HCT116 (cell line): ENCODE measurements at regions of chr2 and their contacts with region 1.

Region 1: GRCh38 chr2:226118471-226119430 is 680.9 kb downstream of the IRS1 start:
- DNase-seq: peak; percentile 89
- ATAC-seq: peak; percentile 63
- H3K4me3 ChIP-seq: no peak overlapping the region
- H3K27ac ChIP-seq: peak overlapping the region; percentile 95
- H3K4me1 ChIP-seq: peaks cover 85 to 97% of the 10 kb centered on the region in 2 experiments
- H3K27me3 ChIP-seq: no peaks in the 10 kb centered on the region
- CTCF ChIP-seq: no peak
- POLR2A ChIP-seq: no peak
- RAD21 ChIP-seq: peak; percentile 38

Region 2: GRCh38 chr2:225668606-225669266 is 450.0 kb before region 1 on chr2:
- CTCF ChIA-PET with region 1: interaction called, 3 read pairs
- POLR2A ChIA-PET with region 1: interaction called, 3 read pairs
- RAD21 ChIA-PET with region 1: no interaction called
- intact Hi-C with region 1: loop called (anchors 1 kb)
- DNase-seq: peak; percentile 72
- ATAC-seq: peak; percentile 79
- H3K4me3 ChIP-seq: no peak overlapping the region
- H3K27ac ChIP-seq: peak overlapping the region; percentile 67; the same call in 1 of the 2 replicates
- H3K4me1 ChIP-seq: peaks cover 21 to 32% of the 10 kb centered on the region in 2 experiments
- H3K27me3 ChIP-seq: no peaks in the 10 kb centered on the region
- CTCF ChIP-seq: peak; percentile 74 to 91 (median 80)
- POLR2A ChIP-seq: no peak
- RAD21 ChIP-seq: peak; percentile 86

Region 3: DNA sequence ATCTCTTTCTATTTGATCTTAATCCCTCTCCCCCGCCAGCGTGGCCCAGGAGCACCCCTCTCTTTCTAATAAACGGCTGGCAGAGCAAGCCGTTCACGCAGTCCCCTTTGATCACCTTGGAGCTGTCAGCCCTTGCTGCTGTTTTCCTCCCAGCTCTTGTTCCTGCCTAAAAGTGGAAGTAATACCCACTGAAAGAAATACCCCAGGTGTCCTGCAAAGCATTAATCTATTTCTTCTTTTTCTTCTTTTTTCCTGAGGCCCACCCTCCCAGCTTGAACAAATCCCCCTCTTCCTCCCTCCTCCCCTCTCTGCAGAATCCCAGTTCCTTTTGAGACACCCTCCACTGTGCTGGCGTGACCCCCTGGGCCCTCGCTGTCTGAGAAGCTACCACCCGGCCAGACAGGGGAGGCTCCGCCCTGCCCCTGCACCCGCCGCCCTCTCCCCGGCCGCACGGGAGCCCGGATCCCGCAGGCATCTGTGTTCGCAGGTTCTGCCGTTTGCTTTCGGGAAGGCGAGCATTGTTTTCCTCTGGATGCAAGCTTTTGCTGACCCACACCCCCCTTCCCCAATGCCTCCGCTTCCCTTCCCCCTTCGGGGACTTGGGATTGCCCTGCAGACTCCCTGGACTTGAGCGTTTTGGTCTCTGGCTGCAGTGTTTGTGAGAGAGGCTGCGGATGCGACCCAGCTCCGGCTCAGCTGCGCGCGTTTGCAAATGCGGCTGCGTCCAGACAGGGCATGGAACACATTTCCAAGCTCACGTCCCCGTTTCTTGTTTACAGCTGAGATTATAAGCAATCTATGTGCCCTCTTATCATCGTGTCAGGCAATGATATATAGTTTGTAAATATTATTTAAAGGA is 87.7 kb before region 1 on chr2:
- CTCF ChIA-PET with region 1: no interaction called
- POLR2A ChIA-PET with region 1: interaction called, 11 read pairs
- RAD21 ChIA-PET with region 1: no interaction called
- intact Hi-C with region 1: loop called (anchors 2 kb)
- DNase-seq: peak; percentile 65
- ATAC-seq: peak; percentile 92
- H3K4me3 ChIP-seq: peak overlapping the region; percentile 48 to 65
- H3K27ac ChIP-seq: peak overlapping the region; percentile 86
- H3K4me1 ChIP-seq: peaks cover 38 to 49% of the 10 kb centered on the region in 2 experiments
- H3K27me3 ChIP-seq: no peaks in the 10 kb centered on the region
- CTCF ChIP-seq: no peak
- POLR2A ChIP-seq: no peak
- RAD21 ChIP-seq: no peak

Region 4: GRCh38 chr2:226185616-226186211 is 67.0 kb after region 1 on chr2:
- CTCF ChIA-PET with region 1: interaction called, 3 read pairs
- POLR2A ChIA-PET with region 1: interaction called, 10 read pairs
- RAD21 ChIA-PET with region 1: no interaction called
- intact Hi-C with region 1: loop called (anchors 2 kb)
- DNase-seq: peak; percentile 84
- ATAC-seq: peak; percentile 68
- H3K4me3 ChIP-seq: peak overlapping the region; percentile 22 to 45; a peak in 3 of 4 replicates
- H3K27ac ChIP-seq: peak overlapping the region; percentile 95
- H3K4me1 ChIP-seq: peaks cover 82 to 100% of the 10 kb centered on the region in 2 experiments
- H3K27me3 ChIP-seq: no peaks in the 10 kb centered on the region
- CTCF ChIP-seq: peak in 1 of 3 experiments; percentile 14; a peak in 2 of 6 replicates
- POLR2A ChIP-seq: no peak
- RAD21 ChIP-seq: peak; percentile 40

Region 5: GRCh38 chr2:226295123-226295522 is 176.4 kb after region 1 on chr2:
- CTCF ChIA-PET with region 1: no interaction called
- POLR2A ChIA-PET with region 1: no interaction called
- RAD21 ChIA-PET with region 1: no interaction called
- intact Hi-C with region 1: no loop called
- DNase-seq: no peak
- ATAC-seq: no peak
- H3K4me3 ChIP-seq: no peak overlapping the region
- H3K27ac ChIP-seq: no peak overlapping the region
- H3K4me1 ChIP-seq: no peaks in the 10 kb centered on the region
- H3K27me3 ChIP-seq: no peaks in the 10 kb centered on the region
- CTCF ChIP-seq: no peak
- POLR2A ChIP-seq: no peak
- RAD21 ChIP-seq: no peak

Region 6: GRCh38 chr2:226611944-226612318 is 493.2 kb after region 1 on chr2:
- CTCF ChIA-PET with region 1: no interaction called
- POLR2A ChIA-PET with region 1: interaction called, 3 read pairs
- RAD21 ChIA-PET with region 1: no interaction called
- intact Hi-C with region 1: loop called (anchors 2 kb)
- DNase-seq: peak; percentile 94
- ATAC-seq: peak; percentile 84
- H3K4me3 ChIP-seq: no peak overlapping the region
- H3K27ac ChIP-seq: peak overlapping the region; percentile 96
- H3K4me1 ChIP-seq: peaks cover 43 to 57% of the 10 kb centered on the region in 2 experiments
- H3K27me3 ChIP-seq: no peaks in the 10 kb centered on the region
- CTCF ChIP-seq: no peak
- POLR2A ChIP-seq: peak; percentile 6
- RAD21 ChIP-seq: peak; percentile 57

Region 7: DNA sequence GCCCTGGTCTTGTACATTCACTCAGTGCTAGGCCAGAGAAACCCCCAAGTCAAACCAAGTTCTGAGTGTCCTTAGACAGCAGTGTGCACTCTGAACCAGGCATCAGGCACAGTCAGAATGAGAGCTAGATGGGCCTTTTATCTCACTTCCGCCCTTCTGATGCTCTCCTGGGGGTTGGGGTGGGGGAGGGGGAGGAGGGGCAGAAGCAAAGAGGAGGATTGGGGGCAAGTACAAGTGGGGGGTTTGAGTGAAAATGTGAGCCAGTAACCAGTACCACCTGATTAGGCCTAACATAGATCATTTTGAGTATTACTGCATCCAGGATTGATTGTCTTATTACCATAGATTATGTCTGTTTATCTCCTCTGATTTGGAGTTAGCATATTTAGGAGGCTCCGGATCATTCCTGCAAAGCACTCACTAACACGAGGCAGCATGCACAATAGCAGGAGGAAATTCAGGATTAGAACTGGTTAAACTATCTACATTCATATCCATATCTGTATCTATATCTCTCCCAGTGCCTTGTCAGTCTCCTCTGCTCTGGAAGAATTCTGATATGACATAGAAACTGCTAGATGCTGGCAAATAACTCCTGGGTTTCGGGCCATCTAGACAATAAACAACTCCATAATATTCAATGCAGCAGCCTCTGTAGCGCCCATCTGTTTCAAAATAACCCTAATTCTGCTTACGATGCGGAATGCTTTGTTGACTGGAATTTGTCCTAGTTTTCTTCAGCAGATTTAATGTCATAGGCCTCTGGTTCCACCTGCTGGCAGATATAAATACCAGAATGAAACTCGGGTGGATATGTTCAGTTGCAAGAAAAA is 866.2 kb after region 1 on chr2:
- CTCF ChIA-PET with region 1: no interaction called
- POLR2A ChIA-PET with region 1: no interaction called
- RAD21 ChIA-PET with region 1: no interaction called
- intact Hi-C with region 1: loop called (anchors 2 kb)
- DNase-seq: peak; percentile 56
- ATAC-seq: peak; percentile 65
- H3K4me3 ChIP-seq: no peak overlapping the region
- H3K27ac ChIP-seq: peak overlapping the region; percentile 57
- H3K4me1 ChIP-seq: peaks cover 47 to 50% of the 10 kb centered on the region in 2 experiments
- H3K27me3 ChIP-seq: no peaks in the 10 kb centered on the region
- CTCF ChIP-seq: peak; percentile 56 to 83 (median 68); a peak in 5 of 6 replicates
- POLR2A ChIP-seq: no peak
- RAD21 ChIP-seq: peak; percentile 95

Region 8: GRCh38 chr2:227191367-227191766 is 1072.6 kb after region 1 on chr2:
- CTCF ChIA-PET with region 1: no interaction called
- POLR2A ChIA-PET with region 1: no interaction called
- RAD21 ChIA-PET with region 1: no interaction called
- intact Hi-C with region 1: no loop called
- DNase-seq: peak; percentile 33
- ATAC-seq: peak; percentile 83
- H3K4me3 ChIP-seq: no peak overlapping the region
- H3K27ac ChIP-seq: no peak overlapping the region
- H3K4me1 ChIP-seq: peaks cover 12 to 37% of the 10 kb centered on the region in 2 experiments
- H3K27me3 ChIP-seq: no peaks in the 10 kb centered on the region
- CTCF ChIP-seq: peak in 2 of 3 experiments; percentile 39 to 47; a peak in 4 of 6 replicates
- POLR2A ChIP-seq: no peak
- RAD21 ChIP-seq: no peak